ENCODE measurements at regions of chr2 and their contacts with region 1.

Region 1: GRCh38 chr2:143901185-143901842 is 618.6 kb downstream of the ZEB2 start:
- DNase-seq: no peak
- H3K4me3 Mint-ChIP-seq: no peak overlapping the region
- H3K27ac Mint-ChIP-seq: no peak overlapping the region
- H3K4me1 Mint-ChIP-seq: peaks cover 20% of the 10 kb centered on the region
- H3K27me3 Mint-ChIP-seq: peaks cover 23% of the 10 kb centered on the region

Region 2: DNA sequence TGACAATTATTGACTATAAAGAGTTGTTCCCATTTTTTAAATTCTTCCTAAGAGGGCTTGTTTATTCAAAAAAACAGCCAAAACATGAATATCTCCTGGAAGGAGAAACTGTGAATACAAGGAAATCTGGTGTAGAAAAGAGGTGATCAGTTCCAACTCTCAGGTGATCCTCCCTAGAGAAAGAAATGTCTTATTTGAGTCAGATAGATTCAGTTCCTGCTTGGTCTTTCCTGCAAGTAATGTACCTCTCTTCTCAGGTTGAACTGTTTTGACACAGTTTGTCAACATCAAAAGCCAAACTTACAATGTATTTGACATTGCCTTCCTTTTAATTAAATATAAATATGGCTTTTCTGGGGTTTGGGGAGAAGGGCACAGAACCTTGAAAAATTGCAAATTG is 204.7 kb before region 1 on chr2:
- intact Hi-C with region 1: loop called (anchors 2 kb)
- DNase-seq: no peak
- H3K4me3 Mint-ChIP-seq: no peak overlapping the region
- H3K27ac Mint-ChIP-seq: no peak overlapping the region
- H3K4me1 Mint-ChIP-seq: peaks cover 27% of the 10 kb centered on the region
- H3K27me3 Mint-ChIP-seq: no peaks in the 10 kb centered on the region

Region 3: GRCh38 chr2:143936848-143937722 is 35.8 kb after region 1 on chr2:
- intact Hi-C with region 1: loop called (anchors 5 kb)
- DNase-seq: no peak
- H3K4me3 Mint-ChIP-seq: peak overlapping the region; percentile 70
- H3K27ac Mint-ChIP-seq: no peak overlapping the region
- H3K4me1 Mint-ChIP-seq: peaks cover 14% of the 10 kb centered on the region
- H3K27me3 Mint-ChIP-seq: peaks cover 68% of the 10 kb centered on the region

Measured in activated T-helper 1 cell treated with anti-CD3 and anti-CD28 coated beads, Interleukin-12 subunit alpha, Interleukin-12 subunit beta, Interleukin-2, Interleukin-4 antibody, amounts not matched to agents 30 ng/mL and 10 ng/mL and 1 ng/mL, durations not matched to agents 14 hours and 24 hours and 36 hours (primary cell).